ENCODE measurements at regions of chrX and their contacts with region 1.

Region 1: DNA sequence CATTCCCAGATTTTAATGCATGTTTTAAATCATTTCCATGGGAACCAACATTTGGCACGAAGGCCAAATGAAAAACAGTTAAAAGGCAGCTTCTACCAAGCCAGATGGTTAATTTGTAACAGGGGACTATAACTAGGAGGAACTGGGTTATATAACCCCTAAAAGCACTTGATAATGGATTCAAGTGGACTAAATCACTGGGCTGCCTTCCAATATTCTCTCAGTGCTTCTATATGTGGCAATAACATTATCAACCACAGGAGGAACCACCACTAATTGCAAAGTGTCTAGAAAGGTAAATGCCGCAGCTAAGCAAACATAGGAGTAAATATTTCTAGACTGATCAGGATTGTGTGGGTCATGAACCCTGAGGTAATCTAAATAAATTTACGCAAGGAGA is 391.5 kb downstream of the UBE2NL start:
- DNase-seq: no peak

Region 2: GRCh38 chrX:144810539-144810938 is 535.2 kb after region 1 on chrX:
- intact Hi-C with region 1: loop called in 1 of 2 experiments (anchors 5 kb)
- DNase-seq: no peak

Measured in posterior vena cava (tissue), 2 donors.